Prostate gland (tissue), 2 donors: ENCODE measurements at regions of chr15 and their contacts with region 1.

Region 1: GRCh38 chr15:100918034-100918689 is 995 bp upstream of the LRRK1 start:
- DNase-seq: peak; percentile 83
- H3K4me3 ChIP-seq: peak overlapping the region; percentile 63 to 70
- H3K27ac ChIP-seq: peak overlapping the region; percentile 82 to 86
- H3K4me1 ChIP-seq: peaks cover 11% of the 10 kb centered on the region
- H3K27me3 ChIP-seq: no peaks in the 10 kb centered on the region
- CTCF ChIP-seq: peak; percentile 88 to 98 (median 94)
- POLR2A ChIP-seq: peak; percentile 34

Region 2: GRCh38 chr15:101008158-101009139 is 90.3 kb after region 1 on chr15:
- intact Hi-C with region 1: loop called (anchors 1 kb)
- DNase-seq: peak; percentile 83
- H3K4me3 ChIP-seq: peak overlapping the region; percentile 25 to 26
- H3K27ac ChIP-seq: peak overlapping the region in 1 of 2 donors; percentile 51
- H3K4me1 ChIP-seq: no peaks in the 10 kb centered on the region
- H3K27me3 ChIP-seq: no peaks in the 10 kb centered on the region
- CTCF ChIP-seq: peak; percentile 85 to 96 (median 94)
- POLR2A ChIP-seq: no peak

Region 3: GRCh38 chr15:101188637-101189408 is 270.7 kb after region 1 on chr15:
- intact Hi-C with region 1: no loop called
- DNase-seq: no peak
- H3K4me3 ChIP-seq: peak overlapping the region; percentile 11 to 18
- H3K27ac ChIP-seq: peak overlapping the region; percentile 79 to 81
- H3K4me1 ChIP-seq: peaks cover 34% of the 10 kb centered on the region
- H3K27me3 ChIP-seq: no peaks in the 10 kb centered on the region
- CTCF ChIP-seq: no peak
- POLR2A ChIP-seq: no peak

Region 4: DNA sequence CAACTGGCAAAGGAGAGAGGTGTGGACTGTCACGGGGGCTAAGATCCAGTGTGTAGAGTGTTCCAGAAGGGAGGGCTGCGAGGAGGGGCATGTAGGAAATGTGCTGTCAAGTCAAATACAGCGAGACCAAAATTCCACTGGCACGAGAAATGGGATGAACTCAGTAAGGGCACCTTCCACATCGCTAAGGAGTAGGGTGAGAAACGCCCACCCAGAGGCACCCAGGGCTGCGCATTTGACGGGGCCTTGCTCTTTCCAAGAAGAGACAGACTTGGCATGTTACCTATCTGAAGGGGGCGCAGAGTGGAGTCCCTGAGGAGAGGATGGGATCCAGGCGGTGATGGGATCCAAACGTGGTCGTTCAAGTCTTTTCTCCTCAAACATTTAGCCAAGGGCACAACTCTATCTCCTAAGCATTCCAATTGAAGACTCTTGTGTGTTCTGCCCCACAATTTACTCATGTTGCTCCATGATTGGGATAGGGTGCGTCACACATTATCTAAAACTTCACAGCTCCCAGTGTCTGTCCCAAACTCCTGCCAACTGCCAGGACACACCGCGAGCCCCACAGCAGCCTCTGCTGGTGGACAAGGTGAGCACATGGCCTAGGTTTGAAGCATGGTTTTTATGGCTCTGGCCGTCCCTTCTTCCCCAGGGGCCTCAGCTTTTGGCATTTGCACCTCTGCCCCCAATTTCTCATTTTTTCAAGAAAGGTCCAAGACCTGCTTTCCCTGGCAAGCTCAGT is 351.5 kb after region 1 on chr15:
- intact Hi-C with region 1: loop called (anchors 5 kb)
- DNase-seq: no peak
- H3K4me3 ChIP-seq: no peak overlapping the region
- H3K27ac ChIP-seq: no peak overlapping the region
- H3K4me1 ChIP-seq: no peaks in the 10 kb centered on the region
- H3K27me3 ChIP-seq: no peaks in the 10 kb centered on the region
- CTCF ChIP-seq: peak in 1 of 4 experiments; percentile 16
- POLR2A ChIP-seq: no peak